ENCODE measurements at regions of chr17 and their contacts with region 1.

Region 1: GRCh38 chr17:28494445-28495188 is 11.5 kb upstream of the FOXN1 start:
- DNase-seq: peak; percentile 93

Region 2: GRCh38 chr17:28279461-28279860 is 215.2 kb before region 1 on chr17:
- intact Hi-C with region 1: no loop called
- DNase-seq: no peak

Region 3: DNA sequence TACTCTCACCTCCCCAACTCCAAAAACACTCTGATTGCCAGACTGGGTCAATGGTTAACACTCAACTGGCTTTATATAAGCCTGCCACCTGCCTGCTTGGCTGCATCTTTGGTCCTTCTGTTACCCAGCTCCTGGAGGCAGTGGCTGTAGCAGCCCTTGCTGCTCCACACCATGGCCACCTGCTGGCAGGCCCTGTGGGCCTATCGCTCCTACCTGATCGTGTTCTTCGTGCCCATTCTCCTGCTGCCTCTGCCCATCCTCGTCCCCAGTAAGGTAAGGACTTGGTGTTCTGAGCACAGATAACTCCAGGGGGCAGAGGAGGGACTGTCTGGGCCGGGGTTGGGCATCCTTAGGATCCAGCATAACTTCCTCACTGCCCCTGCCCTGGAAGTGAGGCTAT is 21.1 kb before region 1 on chr17 and contains the start of gene SLC13A2:
- intact Hi-C with region 1: no loop called
- DNase-seq: no peak
- total RNA-seq, gene SLC13A2: 0.14 TPM in 1 of 2 donors, not detected in the other

Region 4: GRCh38 chr17:28536532-28537238 is 42.1 kb after region 1 on chr17:
- intact Hi-C with region 1: loop called in 1 of 2 experiments (anchors 5 kb)
- DNase-seq: no peak

Region 5: DNA sequence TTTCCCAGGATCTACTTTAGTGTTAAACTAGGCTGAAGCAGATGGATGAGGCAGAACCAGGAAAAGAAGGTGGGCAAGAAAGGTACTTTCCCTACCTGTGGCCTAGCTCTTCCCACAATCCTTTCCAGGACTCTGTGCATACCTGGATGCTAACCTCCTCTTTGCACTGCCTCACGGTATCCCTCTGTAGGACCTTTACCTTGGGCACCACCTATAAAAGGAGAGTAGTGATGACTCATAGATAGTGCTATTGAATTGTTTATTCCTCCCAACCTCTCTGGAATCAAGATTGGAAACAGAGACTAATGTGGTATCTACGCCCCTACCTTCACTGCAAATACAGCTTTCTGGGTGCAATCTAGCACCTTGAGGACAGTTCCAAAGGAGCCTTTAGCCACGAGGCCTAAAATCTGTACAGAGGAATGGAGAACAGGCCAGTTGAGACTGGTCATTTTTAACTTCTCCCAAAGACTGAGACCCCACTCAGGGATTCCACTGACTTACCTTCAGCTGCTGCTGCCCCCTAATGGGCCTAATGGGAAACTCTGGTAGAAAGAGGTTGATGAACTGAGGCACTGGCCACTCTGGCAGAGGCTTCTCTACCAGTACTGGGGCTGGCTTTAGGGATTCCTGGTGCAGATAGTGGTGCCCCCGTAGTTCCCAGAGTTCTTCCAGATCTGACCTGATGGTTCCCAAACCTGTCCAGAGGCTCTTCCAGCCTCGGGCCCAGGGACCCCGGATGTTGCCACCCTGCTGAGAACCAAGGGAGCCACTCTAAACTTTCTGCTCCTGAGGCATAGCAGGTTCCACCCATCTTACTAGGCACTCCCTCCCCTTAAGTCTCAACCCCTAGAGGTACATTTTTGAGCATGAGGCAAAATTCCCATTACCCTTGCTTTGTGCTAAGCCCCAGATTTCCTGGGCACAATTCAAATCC is 118.6 kb after region 1 on chr17:
- intact Hi-C with region 1: loop called in 1 of 2 experiments (anchors 5 kb)
- DNase-seq: no peak